Left ventricle myocardium superior (tissue), 1 donor: ENCODE measurements at regions of chr16 and their contacts with region 1.

Region 1: GRCh38 chr16:22297114-22297878 is at the start of gene POLR3E:
- DNase-seq: peak; percentile 100
- ATAC-seq: peak; percentile 96
- total RNA-seq, gene POLR3E: 41.8 TPM

Region 2: DNA sequence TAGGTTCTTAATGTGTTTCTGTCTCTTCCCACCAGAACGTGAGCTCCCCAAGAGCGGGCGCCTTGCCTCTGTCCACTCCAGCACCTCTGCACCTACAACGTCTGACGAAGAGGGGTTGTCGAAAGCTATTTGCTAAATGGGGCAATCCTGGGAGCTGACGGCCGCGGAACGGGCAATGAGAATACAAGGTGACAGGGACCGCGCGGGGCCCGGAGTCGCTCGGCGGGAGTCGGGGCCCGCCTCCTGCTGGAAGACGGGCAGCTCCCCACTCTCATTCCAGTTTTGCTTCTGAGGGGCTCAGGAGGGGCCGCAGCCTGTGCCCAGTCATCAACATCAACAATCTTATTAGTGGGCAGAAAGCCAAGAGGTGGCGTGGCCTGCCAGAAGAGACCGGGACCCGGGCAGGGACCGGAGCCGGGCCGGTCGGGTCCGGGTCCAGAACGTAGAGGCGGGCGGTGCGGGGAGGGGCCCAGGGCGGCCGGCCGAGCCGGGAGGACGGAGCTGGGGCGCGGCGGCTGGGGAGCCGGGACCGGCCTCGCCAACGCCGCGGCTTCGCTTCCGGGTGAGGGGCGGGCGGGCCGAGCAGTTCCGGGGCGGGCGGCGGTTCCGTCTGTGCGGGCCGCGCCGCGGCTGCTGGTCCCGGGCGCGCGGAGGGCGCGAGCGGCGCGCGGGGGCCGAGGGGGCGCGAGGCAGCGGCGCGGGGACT is 289.6 kb before region 1 on chr16 and contains the start of gene MOSMO:
- intact Hi-C with region 1: loop called (anchors 10 kb)
- DNase-seq: peak; percentile 88
- ATAC-seq: peak; percentile 97
- total RNA-seq, gene MOSMO: 11.3 TPM

Region 3: GRCh38 chr16:22195695-22196558 is 101.4 kb before region 1 on chr16:
- intact Hi-C with region 1: loop called (anchors 5 kb)
- DNase-seq: peak; percentile 91
- ATAC-seq: peak; percentile 46

Region 4: DNA sequence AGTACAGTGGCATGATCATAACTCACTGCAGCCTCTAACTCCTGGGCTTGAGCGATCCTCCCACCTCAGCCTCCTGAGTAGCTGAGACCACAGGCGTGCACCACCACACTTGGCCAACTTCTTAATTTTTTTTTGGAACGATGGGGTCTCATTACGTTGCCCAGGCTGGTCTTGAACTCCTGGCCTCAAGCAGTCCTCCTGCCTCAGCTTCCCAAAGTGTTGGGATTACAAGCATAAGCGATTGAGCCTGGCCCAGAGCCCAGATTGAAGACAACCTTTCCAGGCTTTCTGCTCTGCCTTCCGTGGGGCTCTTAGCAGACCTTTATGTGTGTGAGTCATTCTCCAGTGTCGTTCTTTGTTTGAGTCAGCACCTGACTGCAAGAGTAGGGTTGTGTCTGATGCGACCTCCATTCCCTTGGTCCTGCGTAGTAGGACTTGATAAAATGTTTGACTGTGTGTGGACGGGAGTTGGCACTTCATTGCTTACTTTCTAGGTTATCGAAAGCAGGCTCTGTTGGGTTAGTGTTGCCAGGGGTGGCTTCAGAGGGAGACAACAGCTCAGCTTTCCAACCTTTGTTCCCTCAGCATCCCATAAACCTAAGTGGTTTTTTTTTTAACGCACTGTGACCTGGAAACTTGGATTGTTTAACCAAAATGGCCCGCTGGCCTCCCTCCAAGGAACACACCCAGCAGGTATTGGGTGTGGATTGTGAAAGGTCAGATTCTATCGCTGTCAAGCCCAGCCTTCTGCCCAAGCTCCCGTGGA is 64.8 kb before region 1 on chr16:
- intact Hi-C with region 1: loop called (anchors 10 kb)
- DNase-seq: no peak
- ATAC-seq: peak; percentile 66